PC-9 (cell line): ENCODE measurements at regions of chr6 and their contacts with region 1.

Region 1: GRCh38 chr6:37324131-37325033 is 29.4 kb upstream of the RNF8 start:
- DNase-seq: peak in 1 of 2 experiments; percentile 72
- H3K4me3 ChIP-seq: no peak overlapping the region
- H3K27ac ChIP-seq: 0 out of 2 replicates have a peak overlapping the region, but pooled peaks have one; percentile 4
- H3K4me1 ChIP-seq: peaks cover 13% of the 10 kb centered on the region
- H3K27me3 ChIP-seq: no peaks in the 10 kb centered on the region
- CTCF ChIP-seq: no peak

Region 2: DNA sequence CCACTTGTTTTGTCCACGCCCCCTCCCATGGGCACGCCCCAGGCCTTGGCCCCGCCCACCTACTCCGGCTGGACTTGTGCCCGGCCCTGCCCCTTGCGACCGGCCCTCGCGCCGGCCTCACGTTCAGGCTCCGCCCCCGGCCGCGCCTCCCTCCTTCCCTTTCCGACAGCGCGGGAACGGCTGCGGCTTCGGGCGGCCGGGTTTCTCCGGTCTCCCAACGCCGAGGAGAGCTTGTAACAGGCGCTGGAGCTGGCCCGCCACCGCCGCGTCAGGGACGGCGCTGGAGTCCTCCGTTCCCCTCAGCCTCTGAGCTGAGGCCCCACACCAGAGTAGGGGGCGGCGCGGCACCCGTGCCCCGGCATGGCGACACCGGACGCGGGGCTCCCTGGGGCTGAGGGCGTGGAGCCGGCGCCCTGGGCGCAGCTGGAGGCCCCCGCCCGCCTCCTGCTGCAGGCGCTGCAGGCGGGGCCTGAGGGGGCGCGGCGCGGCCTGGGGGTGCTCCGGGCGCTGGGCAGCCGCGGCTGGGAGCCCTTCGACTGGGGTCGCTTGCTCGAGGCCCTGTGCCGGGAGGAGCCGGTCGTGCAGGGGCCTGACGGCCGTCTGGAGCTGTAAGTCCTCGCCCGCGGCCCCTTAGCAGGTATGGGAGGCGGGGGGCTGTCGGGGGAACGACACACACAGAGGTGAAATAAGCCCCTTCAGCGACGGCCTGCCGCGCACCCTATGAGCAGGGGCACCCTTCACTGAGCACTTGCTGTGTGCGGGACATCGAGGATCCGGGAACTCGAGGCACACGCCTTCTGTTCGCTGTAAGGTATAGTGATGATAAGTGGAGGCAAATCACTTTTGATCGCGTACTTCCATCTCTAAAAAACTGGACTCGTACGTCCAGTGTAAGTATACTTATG is 1871.9 kb before region 1 on chr6 and contains the start of gene FANCE:
- CTCF ChIA-PET with region 1: interaction called, 12 read pairs
- POLR2A ChIA-PET with region 1: no interaction called
- intact Hi-C with region 1: no loop called
- DNase-seq: peak; percentile 76 to 97
- H3K4me3 ChIP-seq: peak within 1 kb of the TSS; percentile 65
- H3K27ac ChIP-seq: no peak within 1 kb of the TSS
- H3K4me1 ChIP-seq: peaks cover 21% of the 10 kb centered on the region
- H3K27me3 ChIP-seq: no peaks in the 10 kb centered on the region
- CTCF ChIP-seq: no peak
- total RNA-seq, gene FANCE: 6.9 and 9.6 TPM in 2 replicates

Region 3: GRCh38 chr6:37190159-37190535 is 134.2 kb before region 1 on chr6:
- CTCF ChIA-PET with region 1: no interaction called
- POLR2A ChIA-PET with region 1: interaction called, 10 read pairs
- intact Hi-C with region 1: no loop called
- DNase-seq: no peak
- H3K4me3 ChIP-seq: no peak overlapping the region
- H3K27ac ChIP-seq: peak overlapping the region; percentile 40
- H3K4me1 ChIP-seq: peaks cover 8% of the 10 kb centered on the region; the same call in 1 of the 2 replicates
- H3K27me3 ChIP-seq: no peaks in the 10 kb centered on the region
- CTCF ChIP-seq: no peak